ENCODE measurements at regions of chr1 and their contacts with region 1.

Region 1: DNA sequence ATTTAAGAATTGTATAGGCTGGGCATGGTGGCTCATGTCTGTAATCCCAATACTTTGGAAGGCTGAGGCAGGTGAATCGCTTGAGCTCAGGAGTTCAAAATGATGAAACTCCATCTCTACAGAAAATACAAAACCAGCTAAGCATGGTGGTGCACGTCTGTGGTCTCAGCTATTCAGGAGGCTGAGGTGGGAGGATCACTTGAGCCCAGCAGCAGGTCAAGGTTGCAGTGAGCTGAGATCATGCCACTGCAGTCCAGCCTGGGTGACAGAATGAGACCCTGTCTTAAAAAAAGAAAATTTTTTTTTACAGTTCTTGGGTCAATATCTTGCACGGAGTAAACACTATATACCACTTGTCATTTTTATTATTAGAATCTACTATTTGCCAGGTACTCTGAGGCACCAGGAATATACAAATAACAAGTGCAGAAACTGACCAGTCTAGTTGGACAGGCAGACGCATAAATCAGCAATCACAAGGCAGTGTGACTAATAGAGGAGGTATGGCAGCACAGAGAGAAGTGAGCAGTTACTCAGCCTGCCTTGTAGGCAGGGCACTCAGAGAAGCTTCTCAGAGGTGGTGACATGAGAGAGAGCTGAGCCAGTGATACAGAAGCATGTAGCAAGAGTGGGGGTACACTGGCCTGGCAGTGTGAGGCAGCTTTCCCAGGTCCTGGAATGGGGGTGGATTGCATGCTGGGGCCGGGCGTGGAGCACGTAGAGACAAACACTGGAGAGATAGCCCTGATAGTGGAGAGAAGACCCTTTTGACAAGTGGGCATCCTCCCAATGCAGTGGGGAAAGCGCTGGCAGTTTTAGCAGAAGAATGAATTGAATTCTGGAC is 8.0 kb downstream of the PHLDA3 start:
- DNase-seq: peak; percentile 99
- H3K4me3 ChIP-seq: peak overlapping the region in 1 of 3 experiments; percentile 14
- H3K27ac ChIP-seq: peak overlapping the region; percentile 98
- H3K4me1 ChIP-seq: peaks cover 78% of the 10 kb centered on the region
- H3K27me3 ChIP-seq: no peaks in the 10 kb centered on the region
- CTCF ChIP-seq: no peak

Region 2: GRCh38 chr1:201309426-201309825 is 151.6 kb before region 1 on chr1:
- CTCF ChIA-PET with region 1: no interaction called
- dilution Hi-C with region 1: loop called (anchors 5 kb)
- in situ Hi-C with region 1: no loop called
- intact Hi-C with region 1: no loop called
- DNase-seq: peak; percentile 94
- H3K4me3 ChIP-seq: no peak overlapping the region
- H3K27ac ChIP-seq: peak overlapping the region; percentile 98
- H3K4me1 ChIP-seq: peaks cover 64% of the 10 kb centered on the region
- H3K27me3 ChIP-seq: no peaks in the 10 kb centered on the region
- CTCF ChIP-seq: peak in 1 of 2 donors; percentile 30

Region 3: DNA sequence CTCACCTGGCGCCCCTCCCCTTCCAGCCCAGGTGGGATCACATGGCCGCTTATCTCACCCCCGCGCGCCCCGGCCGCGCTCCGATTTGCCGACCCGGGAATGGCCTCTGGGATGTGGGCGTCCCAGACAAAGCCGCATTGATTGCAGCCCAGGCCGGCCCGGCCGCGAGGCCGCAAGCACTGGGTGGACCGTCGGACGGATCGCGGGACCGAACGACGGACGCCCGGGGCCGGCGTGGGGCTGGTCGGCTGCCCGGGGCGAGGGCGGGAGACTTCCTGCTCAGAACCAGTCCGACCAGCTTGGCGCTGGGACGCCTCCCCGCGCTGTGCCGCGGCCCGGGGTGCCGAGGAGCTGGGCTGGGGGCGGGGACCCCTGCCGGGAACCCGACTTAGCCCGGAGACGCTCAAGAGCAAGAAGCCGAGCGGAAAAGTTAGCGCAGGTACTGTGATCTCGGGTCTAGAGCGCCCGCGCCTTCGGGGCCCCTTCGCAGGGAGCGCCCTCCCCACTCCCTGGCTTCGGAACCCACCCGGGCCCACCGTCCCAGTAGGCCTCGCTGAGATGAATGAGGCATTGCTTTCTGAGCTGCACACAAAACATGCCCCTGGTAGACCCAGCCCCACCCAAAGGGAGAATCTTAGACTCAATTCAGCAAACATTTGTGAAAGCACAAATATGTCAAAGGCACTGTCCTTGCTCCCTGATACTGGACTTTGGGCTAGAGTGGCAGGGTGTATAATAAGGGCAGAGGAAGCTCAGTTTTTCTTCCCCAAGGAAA is 61.5 kb before region 1 on chr1:
- CTCF ChIA-PET with region 1: no interaction called
- dilution Hi-C with region 1: no loop called
- in situ Hi-C with region 1: no loop called
- intact Hi-C with region 1: loop called (anchors 5 kb)
- DNase-seq: peak; percentile 85
- H3K4me3 ChIP-seq: peak overlapping the region; percentile 88 to 90 (median 90)
- H3K27ac ChIP-seq: peak overlapping the region; percentile 77
- H3K4me1 ChIP-seq: peaks cover 44% of the 10 kb centered on the region
- H3K27me3 ChIP-seq: no peaks in the 10 kb centered on the region
- CTCF ChIP-seq: no peak

Region 4: GRCh38 chr1:201476670-201477344 is 15.8 kb after region 1 on chr1:
- CTCF ChIA-PET with region 1: interaction called, 7 read pairs
- dilution Hi-C with region 1: no loop called
- in situ Hi-C with region 1: no loop called
- intact Hi-C with region 1: loop called (anchors 1 kb)
- DNase-seq: peak; percentile 99
- H3K4me3 ChIP-seq: no peak overlapping the region
- H3K27ac ChIP-seq: peak overlapping the region; percentile 97
- H3K4me1 ChIP-seq: peaks cover 58% of the 10 kb centered on the region
- H3K27me3 ChIP-seq: no peaks in the 10 kb centered on the region
- CTCF ChIP-seq: peak in 1 of 2 donors; percentile 39

Region 5: DNA sequence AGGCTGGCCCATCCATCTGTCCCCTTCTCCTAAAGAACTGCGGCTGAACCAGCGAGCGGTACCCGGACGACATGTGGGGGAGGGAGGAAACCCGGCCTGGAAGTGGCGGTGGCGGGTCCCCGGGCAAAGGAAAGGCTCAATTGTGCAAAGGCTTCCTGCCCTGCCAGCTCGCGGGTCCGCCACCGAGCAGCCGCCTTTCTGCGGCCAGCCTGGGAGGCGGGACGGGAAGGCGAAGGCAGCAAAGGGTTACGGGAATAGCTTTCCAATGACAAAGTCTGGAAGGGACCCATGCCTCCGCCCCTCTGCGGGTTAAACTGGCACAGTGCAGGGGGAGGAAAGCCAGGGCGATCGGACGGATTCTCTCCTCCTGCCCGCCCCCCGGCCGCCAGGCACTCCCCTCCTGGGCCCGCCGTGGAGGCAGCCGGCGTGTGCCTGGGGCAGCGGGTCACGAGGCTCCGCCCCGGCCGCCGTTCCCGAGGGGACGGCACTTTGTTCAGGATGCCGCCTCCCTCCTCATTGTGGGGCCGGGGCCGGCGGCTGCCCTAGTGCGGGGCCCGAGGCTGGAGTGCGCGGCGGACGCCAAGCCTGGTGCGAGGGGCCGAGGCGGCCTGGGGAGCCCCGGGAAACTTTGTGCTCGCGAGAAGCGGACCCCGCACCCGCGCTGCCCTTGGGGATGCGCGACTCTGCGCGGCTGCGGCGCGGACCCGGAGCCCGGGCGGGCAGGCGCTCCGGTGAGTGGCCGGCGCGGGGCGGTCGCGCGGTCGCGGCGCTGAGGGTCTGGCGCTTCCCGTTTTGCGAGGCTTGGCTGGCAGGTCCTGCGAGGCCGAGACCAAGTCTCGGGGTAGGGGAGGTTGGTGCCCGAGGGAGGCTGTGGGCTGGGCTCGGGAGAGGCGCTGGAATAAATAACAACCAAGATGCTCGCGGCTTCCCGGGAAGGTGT is 77.8 kb after region 1 on chr1 and contains the start of gene NAV1:
- CTCF ChIA-PET with region 1: no interaction called
- dilution Hi-C with region 1: no loop called
- in situ Hi-C with region 1: no loop called
- intact Hi-C with region 1: no loop called
- DNase-seq: no peak
- H3K4me3 ChIP-seq: peak within 1 kb of the TSS; percentile 46 to 54 (median 49)
- H3K27ac ChIP-seq: no peak within 1 kb of the TSS
- H3K4me1 ChIP-seq: peaks cover 39% of the 10 kb centered on the region
- H3K27me3 ChIP-seq: no peaks in the 10 kb centered on the region
- CTCF ChIP-seq: no peak
- total RNA-seq, gene NAV1: 24.3 to 94.2 TPM